A549 (cell line): ENCODE measurements at regions of chr5 and their contacts with region 1.

Region 1: DNA sequence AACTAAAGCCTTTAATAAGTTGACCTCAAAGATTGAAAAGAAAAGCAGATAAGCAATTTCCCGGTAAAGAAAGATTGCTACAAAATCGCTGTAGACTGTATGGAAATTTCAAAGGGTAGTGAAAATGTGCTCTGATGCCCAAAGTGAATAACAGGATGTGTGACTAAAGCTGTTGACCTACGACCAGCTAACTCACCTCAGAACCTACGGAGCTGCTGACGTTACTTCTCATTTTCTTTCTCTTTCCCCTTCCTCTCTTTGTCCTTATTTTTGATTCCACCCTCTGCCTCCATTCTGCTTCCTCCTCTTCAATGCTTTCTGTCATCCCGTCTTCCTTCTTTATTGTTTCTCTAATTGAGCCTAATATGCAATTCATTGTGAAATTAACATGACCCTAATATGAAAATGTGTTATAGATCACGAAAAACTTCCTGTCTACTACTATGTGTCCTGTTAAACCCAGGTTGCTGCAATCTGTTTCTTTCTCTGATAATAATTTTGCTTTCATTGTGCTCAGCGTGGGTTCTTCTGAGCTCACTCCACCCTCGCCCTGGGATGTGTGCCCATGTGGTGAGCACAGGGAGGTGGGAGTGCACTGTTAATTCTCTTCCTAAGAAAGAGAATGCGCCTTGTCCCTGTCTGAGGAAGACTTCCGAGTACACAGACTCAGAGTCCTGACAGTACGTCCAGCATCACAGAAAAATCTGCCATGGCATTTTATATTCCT is 103.0 kb downstream of the PDE4D start:
- DNase-seq: peak in 1 of 2 experiments; percentile 77
- ATAC-seq: peak; percentile 41 to 68; a peak in 5 of 6 replicates
- H3K4me3 ChIP-seq: peak overlapping the region; percentile 21
- H3K27ac ChIP-seq: peak overlapping the region; percentile 90 to 95
- H3K4me1 ChIP-seq: peaks cover 90% of the 10 kb centered on the region
- CTCF ChIP-seq: no peak
- EP300 ChIP-seq: peak; percentile 52 to 70; a peak in 3 of 5 replicates
- POLR2A ChIP-seq: peak; percentile 15; the same call in 1 of the 2 replicates
- RAD21 ChIP-seq: no peak

Region 2: DNA sequence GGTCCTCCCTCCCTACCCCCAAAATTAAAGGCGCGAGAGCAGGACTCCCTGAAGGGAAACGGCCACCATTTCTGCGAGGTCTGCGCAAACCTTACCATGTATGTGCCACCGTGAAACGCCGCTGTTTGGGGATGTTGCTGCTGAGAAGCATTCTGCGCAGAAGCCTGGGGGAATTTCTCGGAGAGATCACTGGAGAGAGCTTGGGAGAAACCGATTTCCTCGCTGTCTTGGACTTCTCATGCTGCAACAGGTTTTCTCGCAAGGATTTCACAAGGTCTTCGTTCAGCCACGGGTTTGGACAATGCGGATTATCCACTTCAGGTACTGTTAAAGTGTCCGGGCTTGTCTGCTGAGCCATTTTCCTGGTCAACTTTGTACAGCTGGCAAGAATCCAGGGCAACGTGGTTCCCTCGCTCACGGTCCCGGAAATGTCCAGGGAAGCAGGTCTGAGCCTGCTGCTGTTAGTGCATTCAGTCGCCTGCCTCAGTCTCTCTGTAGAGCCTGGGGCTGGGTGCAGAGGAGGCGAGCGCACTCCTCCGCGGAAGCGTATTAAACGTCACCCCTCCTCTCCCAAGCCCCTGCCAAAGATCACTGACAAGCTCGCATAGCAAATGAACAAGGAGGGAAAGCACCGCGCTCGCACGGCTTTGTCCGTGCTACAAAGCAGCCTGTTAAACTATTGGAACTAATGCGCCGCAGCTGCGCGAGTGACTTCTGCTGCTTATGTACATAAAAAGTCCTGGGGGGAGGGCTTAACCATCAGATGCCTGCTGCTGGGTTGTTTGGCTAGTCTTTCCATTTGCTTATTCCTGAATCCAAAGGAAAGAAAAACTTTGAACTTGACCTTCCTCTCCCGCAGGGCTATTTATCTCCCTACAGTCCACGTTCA is 22.2 kb before region 1 on chr5:
- CTCF ChIA-PET with region 1: interaction called, 5 read pairs
- POLR2A ChIA-PET with region 1: interaction called, 36 read pairs
- DNase-seq: peak in 1 of 2 experiments; percentile 90
- ATAC-seq: peak; percentile 82 to 83
- H3K4me3 ChIP-seq: peak overlapping the region; percentile 79
- H3K27ac ChIP-seq: peak overlapping the region; percentile 91 to 95
- H3K4me1 ChIP-seq: peaks cover 56% of the 10 kb centered on the region
- CTCF ChIP-seq: no peak
- EP300 ChIP-seq: peak in 1 of 2 experiments; percentile 31; a peak in 1 of 5 replicates
- POLR2A ChIP-seq: peak; percentile 13; the same call in 1 of the 2 replicates
- RAD21 ChIP-seq: peak in 1 of 2 experiments; percentile 21; a peak in 1 of 5 replicates

Region 3: GRCh38 chr5:59923465-59923864 is 132.9 kb after region 1 on chr5:
- CTCF ChIA-PET with region 1: no interaction called
- POLR2A ChIA-PET with region 1: no interaction called
- DNase-seq: peak in 1 of 2 experiments; percentile 25
- ATAC-seq: peak in 1 of 2 experiments; percentile 47; a peak in 2 of 6 replicates
- H3K4me3 ChIP-seq: no peak overlapping the region
- H3K27ac ChIP-seq: no peak overlapping the region
- H3K4me1 ChIP-seq: no peaks in the 10 kb centered on the region
- CTCF ChIP-seq: no peak
- EP300 ChIP-seq: no peak
- POLR2A ChIP-seq: no peak
- RAD21 ChIP-seq: peak; percentile 30 to 58; a peak in 3 of 5 replicates